ENCODE measurements at regions of chr1 and their contacts with region 1.

Region 1: GRCh38 chr1:109630081-109630897 is 10.7 kb downstream of the AMPD2 start:
- DNase-seq: no peak
- ATAC-seq: peak; percentile 8
- H3K4me3 ChIP-seq: no peak overlapping the region
- H3K27ac ChIP-seq: no peak overlapping the region
- H3K4me1 ChIP-seq: no peaks in the 10 kb centered on the region
- H3K27me3 ChIP-seq: no peaks in the 10 kb centered on the region
- CTCF ChIP-seq: peak; percentile 37

Region 2: GRCh38 chr1:109307274-109308021 is 322.8 kb before region 1 on chr1:
- intact Hi-C with region 1: no loop called
- DNase-seq: peak; percentile 76
- ATAC-seq: peak; percentile 76
- H3K4me3 ChIP-seq: no peak overlapping the region
- H3K27ac ChIP-seq: peak overlapping the region; percentile 63
- H3K4me1 ChIP-seq: peaks cover 26% of the 10 kb centered on the region
- H3K27me3 ChIP-seq: no peaks in the 10 kb centered on the region
- CTCF ChIP-seq: no peak

Region 3: DNA sequence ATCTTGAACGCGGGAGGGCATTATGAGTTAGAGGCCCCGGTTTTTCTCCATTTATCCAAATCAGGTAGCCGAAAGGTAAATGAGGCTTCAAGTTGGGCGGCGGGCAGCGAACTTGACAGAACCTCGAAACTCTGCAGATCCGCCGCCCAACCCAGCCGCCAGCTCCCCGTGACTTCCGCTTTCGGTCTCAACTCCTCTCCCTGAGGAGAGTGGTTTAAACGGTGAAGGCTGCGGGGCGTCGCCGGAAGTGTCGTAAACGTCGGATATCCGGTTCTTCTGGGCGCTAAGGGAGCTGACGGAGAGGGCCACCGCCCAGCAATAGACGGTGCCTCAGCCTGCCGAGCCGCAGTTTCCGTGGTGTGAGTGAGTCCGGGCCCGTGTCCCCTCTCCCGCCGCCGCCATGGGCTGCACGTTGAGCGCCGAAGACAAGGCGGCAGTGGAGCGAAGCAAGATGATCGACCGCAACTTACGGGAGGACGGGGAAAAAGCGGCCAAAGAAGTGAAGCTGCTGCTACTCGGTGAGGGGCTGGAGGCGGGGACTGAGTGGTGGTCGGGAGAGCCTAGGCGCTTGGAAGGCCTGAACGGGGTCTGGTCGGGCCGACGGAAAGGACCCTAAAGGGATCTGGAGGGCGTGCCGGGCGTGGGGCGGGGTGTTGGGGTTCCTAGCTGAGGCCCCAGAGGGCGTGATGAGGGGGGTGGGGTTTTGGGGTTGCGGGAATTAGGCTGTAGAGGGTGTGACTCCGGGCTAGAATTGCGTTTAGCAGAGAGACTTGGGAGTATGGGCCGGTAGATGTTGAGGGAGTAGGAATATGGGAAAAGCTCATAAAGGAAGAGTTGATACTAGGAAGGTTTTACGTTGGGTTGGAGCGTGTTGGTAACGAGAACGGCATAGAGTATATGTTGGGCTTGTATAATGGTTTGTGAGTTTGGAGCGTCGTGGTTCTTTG is 81.7 kb before region 1 on chr1 and contains the start of gene GNAI3:
- intact Hi-C with region 1: loop called (anchors 5 kb)
- DNase-seq: peak; percentile 98
- ATAC-seq: peak; percentile 98
- H3K4me3 ChIP-seq: peak within 1 kb of the TSS; percentile 93
- H3K27ac ChIP-seq: peak within 1 kb of the TSS; percentile 96
- H3K4me1 ChIP-seq: peaks cover 45% of the 10 kb centered on the region
- H3K27me3 ChIP-seq: no peaks in the 10 kb centered on the region
- CTCF ChIP-seq: no peak
- total RNA-seq, gene GNAI3: 6.9 TPM

Region 4: GRCh38 chr1:109850827-109851226 is 220.5 kb after region 1 on chr1:
- intact Hi-C with region 1: no loop called
- DNase-seq: no peak
- ATAC-seq: no peak
- H3K4me3 ChIP-seq: no peak overlapping the region
- H3K27ac ChIP-seq: no peak overlapping the region
- H3K4me1 ChIP-seq: no peaks in the 10 kb centered on the region
- H3K27me3 ChIP-seq: no peaks in the 10 kb centered on the region
- CTCF ChIP-seq: no peak

Measured in upper lobe of right lung (tissue), 1 donor.